PC-9 (cell line): ENCODE measurements at regions of chr12 and their contacts with region 1.

Region 1: GRCh38 chr12:121217063-121217462 is 7.1 kb downstream of the P2RX4 start:
- DNase-seq: no peak
- H3K4me3 ChIP-seq: no peak overlapping the region
- H3K27ac ChIP-seq: no peak overlapping the region
- H3K4me1 ChIP-seq: peaks cover 30% of the 10 kb centered on the region
- H3K27me3 ChIP-seq: no peaks in the 10 kb centered on the region
- CTCF ChIP-seq: no peak

Region 2: GRCh38 chr12:121124402-121125098 is 92.5 kb before region 1 on chr12:
- CTCF ChIA-PET with region 1: no interaction called
- POLR2A ChIA-PET with region 1: no interaction called
- intact Hi-C with region 1: loop called (anchors 1 kb)
- DNase-seq: peak; percentile 83 to 99
- H3K4me3 ChIP-seq: no peak overlapping the region
- H3K27ac ChIP-seq: peak overlapping the region; percentile 70
- H3K4me1 ChIP-seq: peaks cover 18% of the 10 kb centered on the region
- H3K27me3 ChIP-seq: no peaks in the 10 kb centered on the region
- CTCF ChIP-seq: no peak